ENCODE measurements at regions of chr19 and their contacts with region 1.

Region 1: GRCh38 chr19:40305403-40305802 is 20.3 kb upstream of the AKT2 start:
- DNase-seq: peak; percentile 92
- H3K4me3 Mint-ChIP-seq: no peak overlapping the region
- H3K27ac Mint-ChIP-seq: no peak overlapping the region
- H3K4me1 Mint-ChIP-seq: peaks cover 8% of the 10 kb centered on the region
- H3K27me3 Mint-ChIP-seq: no peaks in the 10 kb centered on the region
- CTCF ChIP-seq: peak; percentile 72

Region 2: DNA sequence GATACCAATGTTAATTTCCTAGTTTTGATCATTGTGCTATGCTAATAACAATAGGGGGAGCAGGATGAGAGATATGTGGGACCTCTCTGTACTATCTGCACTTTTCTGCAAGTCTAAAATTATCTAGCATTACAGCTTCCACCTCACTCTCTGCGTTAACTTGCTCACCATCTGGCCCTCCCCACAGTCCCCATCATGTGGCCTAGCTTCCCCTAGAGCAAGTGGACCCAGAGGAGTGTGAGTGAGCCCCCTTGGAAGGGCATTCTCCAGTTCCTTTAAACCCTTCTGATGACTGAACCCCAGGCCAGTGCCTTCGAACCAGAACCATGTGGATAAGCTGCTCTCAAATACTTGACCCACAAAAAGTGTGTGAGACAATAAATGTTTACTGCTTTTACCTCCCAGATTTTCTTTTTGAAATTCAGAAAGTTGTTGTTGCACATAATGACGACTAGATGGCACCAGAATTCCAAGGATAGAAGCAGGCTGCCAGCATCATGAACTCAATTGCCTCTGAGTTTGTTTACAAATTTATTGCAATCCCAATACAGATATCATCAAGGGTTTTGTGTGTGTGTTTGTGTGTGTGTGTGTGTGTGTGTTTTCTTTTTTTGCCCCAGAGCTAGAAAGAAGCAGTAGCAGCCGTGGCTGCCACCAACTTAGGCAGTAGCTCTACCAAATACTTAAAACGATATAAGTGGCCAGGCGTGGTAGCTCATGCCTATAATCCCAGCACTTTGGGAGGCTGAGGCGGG is 165.7 kb before region 1 on chr19:
- CTCF ChIA-PET with region 1: interaction called, 12 read pairs
- POLR2A ChIA-PET with region 1: no interaction called
- intact Hi-C with region 1: loop called (anchors 2 kb)
- DNase-seq: peak; percentile 63
- H3K4me3 Mint-ChIP-seq: no peak overlapping the region
- H3K27ac Mint-ChIP-seq: no peak overlapping the region
- H3K4me1 Mint-ChIP-seq: no peaks in the 10 kb centered on the region
- H3K27me3 Mint-ChIP-seq: peaks cover 34% of the 10 kb centered on the region
- CTCF ChIP-seq: peak; percentile 76

Region 3: DNA sequence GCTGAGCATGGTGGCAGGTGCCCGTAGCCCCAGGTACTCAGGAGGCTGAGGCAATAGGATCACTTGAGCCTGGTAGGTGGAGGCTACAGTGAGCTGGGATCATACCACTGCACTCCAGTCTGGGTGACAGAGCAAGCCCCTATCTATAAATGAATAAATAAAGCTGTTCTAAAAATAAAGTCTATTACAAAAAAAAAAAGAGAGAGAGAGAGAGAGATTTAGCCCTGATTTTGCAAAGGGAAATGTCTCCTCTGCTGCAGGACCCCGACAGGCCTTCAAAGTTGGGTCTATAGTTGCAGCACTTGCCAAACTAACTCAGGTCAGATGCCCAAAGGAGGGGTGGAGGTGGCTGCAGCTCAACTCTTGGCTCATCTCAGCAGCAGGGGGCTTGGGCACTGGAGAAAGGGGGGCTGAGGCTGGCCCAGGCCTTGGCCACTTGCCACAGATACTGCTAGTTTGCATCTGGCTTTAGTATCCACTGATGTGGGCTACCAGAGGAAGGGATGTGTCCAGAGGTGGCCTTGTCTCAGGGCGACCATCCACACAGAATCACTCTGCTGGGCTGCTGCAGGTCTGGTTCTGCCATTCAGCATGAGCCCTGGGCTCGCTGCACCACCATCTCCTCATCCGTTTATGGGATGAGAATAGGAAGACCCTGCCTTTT is 10.5 kb after region 1 on chr19:
- CTCF ChIA-PET with region 1: interaction called, 10 read pairs
- POLR2A ChIA-PET with region 1: interaction called, 4 read pairs
- intact Hi-C with region 1: no loop called
- DNase-seq: no peak
- H3K4me3 Mint-ChIP-seq: no peak overlapping the region
- H3K27ac Mint-ChIP-seq: no peak overlapping the region
- H3K4me1 Mint-ChIP-seq: no peaks in the 10 kb centered on the region
- H3K27me3 Mint-ChIP-seq: no peaks in the 10 kb centered on the region
- CTCF ChIP-seq: no peak

Region 4: GRCh38 chr19:40348125-40348913 is 42.9 kb after region 1 on chr19 and contains the starts of genes C19orf47 and PLD3:
- CTCF ChIA-PET with region 1: interaction called, 10 read pairs
- POLR2A ChIA-PET with region 1: interaction called, 14 read pairs
- intact Hi-C with region 1: no loop called
- DNase-seq: peak; percentile 99
- H3K4me3 Mint-ChIP-seq: peak within 1 kb of the TSS; percentile 99
- H3K27ac Mint-ChIP-seq: peak within 1 kb of the TSS; percentile 95
- H3K4me1 Mint-ChIP-seq: peaks cover 17% of the 10 kb centered on the region
- H3K27me3 Mint-ChIP-seq: no peaks in the 10 kb centered on the region
- CTCF ChIP-seq: no peak
- total RNA-seq, gene C19orf47: 14.9 and 16.1 TPM in 2 replicates
- total RNA-seq, gene PLD3: 98.9 and 130 TPM in 2 replicates

Region 5: GRCh38 chr19:40444192-40445028 is 139.0 kb after region 1 on chr19 and contains the start of gene SERTAD3:
- CTCF ChIA-PET with region 1: interaction called, 6 read pairs
- POLR2A ChIA-PET with region 1: interaction called, 4 read pairs
- intact Hi-C with region 1: loop called (anchors 5 kb)
- DNase-seq: peak; percentile 96
- H3K4me3 Mint-ChIP-seq: peak within 1 kb of the TSS; percentile 100
- H3K27ac Mint-ChIP-seq: peak within 1 kb of the TSS; percentile 92
- H3K4me1 Mint-ChIP-seq: peaks cover 22% of the 10 kb centered on the region
- H3K27me3 Mint-ChIP-seq: no peaks in the 10 kb centered on the region
- CTCF ChIP-seq: no peak
- total RNA-seq, gene SERTAD3: 23.3 and 29.4 TPM in 2 replicates

Region 6: GRCh38 chr19:40633207-40633606 is 327.8 kb after region 1 on chr19:
- CTCF ChIA-PET with region 1: interaction called, 10 read pairs
- POLR2A ChIA-PET with region 1: no interaction called
- intact Hi-C with region 1: loop called (anchors 10 kb)
- DNase-seq: no peak
- H3K4me3 Mint-ChIP-seq: no peak overlapping the region
- H3K27ac Mint-ChIP-seq: no peak overlapping the region
- H3K4me1 Mint-ChIP-seq: peaks cover 6% of the 10 kb centered on the region
- H3K27me3 Mint-ChIP-seq: no peaks in the 10 kb centered on the region
- CTCF ChIP-seq: no peak